ENCODE measurements at regions of chr1 and their contacts with region 1.

Region 1: GRCh38 chr1:237562242-237562823 is 328.4 kb downstream of the ZP4 start:
- DNase-seq: no peak
- ATAC-seq: peak; percentile 72
- H3K4me3 Mint-ChIP-seq: no peak overlapping the region
- H3K27ac Mint-ChIP-seq: no peak overlapping the region
- H3K4me1 Mint-ChIP-seq: no peaks in the 10 kb centered on the region
- H3K27me3 Mint-ChIP-seq: peaks cover 11% of the 10 kb centered on the region

Region 2: GRCh38 chr1:236913371-236914037 is 648.8 kb before region 1 on chr1:
- CTCF ChIA-PET with region 1: no interaction called
- POLR2A ChIA-PET with region 1: no interaction called
- intact Hi-C with region 1: loop called in 1 of 2 experiments (anchors 10 kb)
- DNase-seq: no peak
- ATAC-seq: peak; percentile 91
- H3K4me3 Mint-ChIP-seq: no peak overlapping the region
- H3K27ac Mint-ChIP-seq: no peak overlapping the region
- H3K4me1 Mint-ChIP-seq: peaks cover 9% of the 10 kb centered on the region
- H3K27me3 Mint-ChIP-seq: no peaks in the 10 kb centered on the region

Region 3: DNA sequence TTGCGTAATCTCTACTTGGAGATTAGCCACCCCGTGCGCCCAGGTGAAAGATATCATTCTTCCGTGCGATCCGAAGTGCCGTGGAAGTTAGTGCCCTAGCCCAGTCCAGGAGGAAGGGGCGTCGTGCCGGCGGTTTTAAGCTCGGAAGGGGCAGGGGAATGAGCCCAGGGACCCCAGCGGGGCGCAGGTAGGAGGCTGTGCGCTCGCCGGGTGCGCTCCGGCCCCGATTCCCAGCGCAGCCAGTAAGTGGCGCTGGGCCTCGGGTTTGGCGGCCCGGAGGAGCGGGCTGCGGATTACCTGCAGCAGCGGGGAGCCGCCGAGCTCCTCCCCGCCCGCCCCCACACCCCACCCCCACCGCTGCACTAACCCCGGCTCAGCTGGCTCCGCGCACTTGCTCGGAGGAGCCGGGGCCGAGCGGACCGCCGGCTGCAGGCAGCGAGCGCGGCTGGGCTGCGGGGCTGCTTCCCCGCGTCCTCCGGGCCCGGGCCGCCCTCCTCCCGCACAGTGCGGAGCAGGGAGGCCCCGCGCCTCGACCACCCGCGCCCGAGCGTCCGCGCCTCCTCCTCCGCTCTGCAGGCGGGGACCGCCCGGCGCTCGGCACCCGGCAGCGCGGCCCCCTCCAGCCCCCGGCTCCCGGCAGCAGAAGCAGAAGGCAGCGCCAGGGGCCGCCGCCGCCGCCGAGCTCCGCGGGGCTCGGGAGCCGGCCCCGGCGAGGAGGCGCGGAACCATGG is 520.4 kb before region 1 on chr1 and contains the start of gene RYR2:
- CTCF ChIA-PET with region 1: no interaction called
- POLR2A ChIA-PET with region 1: no interaction called
- intact Hi-C with region 1: loop called in 1 of 2 experiments (anchors 5 kb)
- DNase-seq: peak; percentile 52
- ATAC-seq: peak; percentile 75
- H3K4me3 Mint-ChIP-seq: no peak within 1 kb of the TSS
- H3K27ac Mint-ChIP-seq: no peak within 1 kb of the TSS
- H3K4me1 Mint-ChIP-seq: peaks cover 16% of the 10 kb centered on the region
- H3K27me3 Mint-ChIP-seq: peaks cover 44% of the 10 kb centered on the region
- total RNA-seq, gene RYR2: 0.04 to 0.05 TPM

Region 4: GRCh38 chr1:237327061-237327460 is 235.3 kb before region 1 on chr1:
- CTCF ChIA-PET with region 1: no interaction called
- POLR2A ChIA-PET with region 1: no interaction called
- intact Hi-C with region 1: no loop called
- DNase-seq: no peak
- ATAC-seq: no peak
- H3K4me3 Mint-ChIP-seq: no peak overlapping the region
- H3K27ac Mint-ChIP-seq: no peak overlapping the region
- H3K4me1 Mint-ChIP-seq: no peaks in the 10 kb centered on the region
- H3K27me3 Mint-ChIP-seq: peaks cover 3% of the 10 kb centered on the region

Region 5: DNA sequence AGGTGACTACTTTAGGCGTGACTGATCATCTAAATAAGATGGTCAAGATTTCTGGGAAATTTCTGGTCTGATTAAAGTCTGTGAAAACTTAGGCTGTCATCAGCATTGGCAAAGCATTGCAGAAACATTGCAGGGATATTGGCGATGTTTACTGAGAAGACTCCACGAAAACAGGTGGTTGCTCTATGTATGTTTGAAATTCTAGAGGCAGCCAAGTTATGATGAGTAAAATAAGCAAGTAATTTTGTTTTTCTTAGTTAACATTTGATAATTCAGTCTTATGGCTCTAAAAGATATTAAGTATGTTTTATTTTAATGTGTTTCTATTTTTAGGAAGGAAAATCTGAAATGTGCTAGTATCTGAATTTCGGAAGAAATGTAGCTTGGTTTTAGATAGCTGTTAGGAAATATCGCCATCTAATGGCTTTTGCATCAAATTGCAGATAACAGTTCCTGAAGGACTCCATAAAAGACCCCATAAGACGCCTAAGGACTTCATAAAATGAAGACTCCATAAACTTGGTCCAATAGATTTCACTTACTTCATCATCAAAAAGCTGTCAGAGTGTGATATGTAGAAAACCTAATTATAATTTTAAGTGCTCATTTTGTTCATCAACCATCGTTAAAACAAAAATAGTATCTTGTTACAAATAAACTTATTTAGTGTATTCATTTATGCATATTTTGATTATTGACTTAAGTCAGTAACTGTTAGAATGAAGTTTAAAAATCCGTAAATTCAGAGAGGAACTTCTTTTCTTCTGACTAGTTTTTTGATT is 175.8 kb before region 1 on chr1:
- CTCF ChIA-PET with region 1: interaction called, 11 read pairs
- POLR2A ChIA-PET with region 1: no interaction called
- intact Hi-C with region 1: loop called in 1 of 2 experiments (anchors 5 kb)
- DNase-seq: no peak
- ATAC-seq: no peak
- H3K4me3 Mint-ChIP-seq: no peak overlapping the region
- H3K27ac Mint-ChIP-seq: no peak overlapping the region
- H3K4me1 Mint-ChIP-seq: no peaks in the 10 kb centered on the region
- H3K27me3 Mint-ChIP-seq: peaks cover 2% of the 10 kb centered on the region

Region 6: GRCh38 chr1:237891979-237892378 is 329.6 kb after region 1 on chr1:
- CTCF ChIA-PET with region 1: no interaction called
- POLR2A ChIA-PET with region 1: no interaction called
- intact Hi-C with region 1: no loop called
- DNase-seq: no peak
- ATAC-seq: no peak
- H3K4me3 Mint-ChIP-seq: no peak overlapping the region
- H3K27ac Mint-ChIP-seq: no peak overlapping the region
- H3K4me1 Mint-ChIP-seq: no peaks in the 10 kb centered on the region
- H3K27me3 Mint-ChIP-seq: no peaks in the 10 kb centered on the region

Measured in activated CD4-positive, alpha-beta T cell treated with anti-CD3 and anti-CD28 coated beads for 36 hours (primary cell).